ENCODE measurements at regions of chr7 and their contacts with region 1.

Region 1: GRCh38 chr7:87312215-87312865 is 33.1 kb upstream of the CROT start:
- DNase-seq: peak; percentile 61
- H3K4me3 ChIP-seq: no peak overlapping the region
- H3K27ac ChIP-seq: no peak overlapping the region
- H3K4me1 ChIP-seq: no peaks in the 10 kb centered on the region
- CTCF ChIP-seq: peak; percentile 99

Region 2: GRCh38 chr7:87159538-87159937 is 152.8 kb before region 1 on chr7:
- CTCF ChIA-PET with region 1: no interaction called
- POLR2A ChIA-PET with region 1: no interaction called
- intact Hi-C with region 1: no loop called
- DNase-seq: peak; percentile 16
- H3K4me3 ChIP-seq: peak overlapping the region; percentile 5
- H3K27ac ChIP-seq: peak overlapping the region; percentile 14
- H3K4me1 ChIP-seq: peaks cover 56% of the 10 kb centered on the region
- CTCF ChIP-seq: no peak

Region 3: DNA sequence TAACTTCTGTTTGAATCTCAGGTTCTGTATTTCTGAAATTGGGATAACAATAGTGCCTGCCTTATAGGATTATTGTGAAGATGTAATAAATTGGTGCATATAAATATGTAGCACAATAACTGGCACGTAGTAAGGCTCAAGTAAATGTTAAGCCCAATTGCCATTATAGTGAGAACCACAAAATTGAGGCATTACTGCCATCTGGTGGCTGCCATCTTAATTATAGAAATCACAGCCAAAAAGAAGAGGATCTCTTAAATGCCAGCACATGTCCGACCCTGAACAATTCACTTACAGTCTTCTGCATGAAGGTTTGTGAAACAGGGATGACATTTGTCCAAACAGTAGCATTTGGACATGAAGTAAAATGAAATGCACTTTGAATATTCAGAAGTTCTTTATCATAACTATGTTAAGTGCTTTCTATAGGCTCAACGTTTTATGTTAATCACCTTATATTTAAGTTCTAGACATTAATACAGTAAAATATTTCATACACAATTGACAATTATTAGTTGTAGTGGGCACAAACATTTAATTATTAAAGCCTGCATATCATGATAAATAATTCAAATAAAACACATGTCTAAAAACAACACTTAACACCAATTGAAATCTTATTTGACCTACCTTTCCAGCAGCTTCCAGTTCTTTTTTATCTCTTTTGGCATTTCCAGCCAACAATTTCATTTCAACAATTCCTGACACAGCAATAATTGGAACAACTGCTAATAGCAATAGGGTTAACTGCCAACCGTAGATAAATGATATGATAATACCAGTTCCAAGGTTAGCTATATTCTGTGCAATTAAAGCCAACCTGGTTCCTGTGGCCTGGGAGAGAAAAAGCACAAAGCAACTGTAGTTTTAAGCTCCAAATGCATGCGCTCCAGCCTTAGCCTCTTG is 104.6 kb after region 1 on chr7:
- CTCF ChIA-PET with region 1: interaction called, 3 read pairs
- POLR2A ChIA-PET with region 1: interaction called, 3 read pairs
- intact Hi-C with region 1: loop called (anchors 1 kb)
- DNase-seq: peak; percentile 75
- H3K4me3 ChIP-seq: no peak overlapping the region
- H3K27ac ChIP-seq: no peak overlapping the region
- H3K4me1 ChIP-seq: no peaks in the 10 kb centered on the region
- CTCF ChIP-seq: peak; percentile 90

Region 4: GRCh38 chr7:87506246-87507180 is 194.2 kb after region 1 on chr7:
- CTCF ChIA-PET with region 1: no interaction called
- POLR2A ChIA-PET with region 1: no interaction called
- intact Hi-C with region 1: loop called (anchors 1 kb)
- DNase-seq: no peak
- H3K4me3 ChIP-seq: no peak overlapping the region
- H3K27ac ChIP-seq: no peak overlapping the region
- H3K4me1 ChIP-seq: no peaks in the 10 kb centered on the region
- CTCF ChIP-seq: peak; percentile 67

Region 5: DNA sequence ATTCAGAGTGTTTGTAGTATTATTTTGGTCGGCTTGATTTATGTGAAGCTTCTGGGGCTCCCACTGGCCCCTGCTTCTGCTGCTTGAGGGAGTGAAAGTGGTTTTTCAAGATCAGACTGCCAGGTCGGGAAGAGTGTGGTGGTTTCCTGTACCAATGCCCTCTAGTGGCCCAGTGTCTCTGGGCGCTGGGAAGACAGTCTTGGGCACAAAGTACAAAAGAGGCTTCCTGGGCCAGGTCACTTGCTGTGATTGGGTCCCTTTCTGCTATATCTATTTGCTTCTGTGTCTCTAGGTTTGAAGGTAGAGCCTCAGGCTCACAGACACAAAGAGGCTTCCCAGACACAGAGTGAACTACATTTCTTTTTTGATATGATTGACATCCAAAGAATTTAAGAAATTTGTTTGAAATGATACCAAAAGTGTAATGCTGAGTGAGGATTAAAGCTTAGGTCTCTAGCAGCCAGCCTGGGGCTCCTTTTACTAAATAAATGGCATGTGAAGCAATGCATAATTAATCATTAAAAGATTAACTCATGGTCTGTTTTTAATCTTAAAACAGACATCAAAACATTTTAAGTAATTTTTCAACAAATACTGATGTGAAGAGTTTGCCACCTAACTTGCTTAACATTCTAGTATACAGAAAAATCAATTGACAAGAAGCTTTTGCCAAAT is 252.1 kb after region 1 on chr7:
- CTCF ChIA-PET with region 1: no interaction called
- POLR2A ChIA-PET with region 1: no interaction called
- intact Hi-C with region 1: loop called (anchors 1 kb)
- DNase-seq: peak; percentile 37
- H3K4me3 ChIP-seq: no peak overlapping the region
- H3K27ac ChIP-seq: no peak overlapping the region
- H3K4me1 ChIP-seq: no peaks in the 10 kb centered on the region
- CTCF ChIP-seq: peak; percentile 73